SK-N-SH (cell line): ENCODE measurements at regions of chr6 and their contacts with region 1.

Region 1: DNA sequence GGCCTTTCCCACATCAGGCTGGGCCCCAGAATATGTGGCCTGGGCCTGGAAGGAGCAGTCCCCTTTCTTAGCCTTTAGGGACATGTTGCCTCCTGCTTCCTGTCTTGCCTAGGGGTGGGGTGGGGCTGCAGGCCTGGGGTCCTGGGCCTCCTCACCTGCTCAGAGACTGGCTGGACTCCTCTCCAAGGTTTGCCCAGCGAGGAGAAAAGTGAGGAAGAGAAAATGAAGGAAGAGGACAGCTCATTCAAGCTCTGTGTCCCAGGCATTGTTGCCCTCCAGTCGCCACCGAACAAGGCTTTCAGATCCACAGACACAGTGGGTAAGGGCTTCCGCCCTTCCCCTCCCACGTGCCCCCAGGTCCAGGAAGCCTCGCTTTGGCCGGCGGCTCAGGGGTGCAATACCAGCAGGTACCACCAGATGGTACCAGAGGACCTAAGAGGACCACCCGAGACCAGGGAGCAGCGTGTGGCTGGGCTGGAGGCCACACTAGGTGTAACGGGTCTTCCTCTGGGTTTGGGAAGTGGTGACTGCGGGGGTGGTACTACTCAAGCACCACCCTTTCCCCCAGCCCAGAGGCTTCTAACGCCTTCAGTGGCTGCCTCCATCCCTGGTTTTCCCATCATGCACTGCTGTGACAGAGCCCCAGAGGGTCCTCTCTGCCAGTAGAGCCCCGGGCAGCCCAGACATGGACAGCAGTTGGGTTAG is 5.5 kb upstream of the BAK1 start:
- DNase-seq: peak; percentile 89
- H3K4me3 ChIP-seq: peak overlapping the region in 1 of 2 experiments; percentile 35; a peak in 2 of 4 replicates
- H3K27ac ChIP-seq: no peak overlapping the region
- H3K4me1 ChIP-seq: peaks cover 7 to 19% of the 10 kb centered on the region in 2 experiments; a peak in 3 of 4 replicates
- H3K27me3 ChIP-seq: no peaks in the 10 kb centered on the region
- CTCF ChIP-seq: peak; percentile 95
- EP300 ChIP-seq: no peak
- RAD21 ChIP-seq: peak; percentile 91

Region 2: DNA sequence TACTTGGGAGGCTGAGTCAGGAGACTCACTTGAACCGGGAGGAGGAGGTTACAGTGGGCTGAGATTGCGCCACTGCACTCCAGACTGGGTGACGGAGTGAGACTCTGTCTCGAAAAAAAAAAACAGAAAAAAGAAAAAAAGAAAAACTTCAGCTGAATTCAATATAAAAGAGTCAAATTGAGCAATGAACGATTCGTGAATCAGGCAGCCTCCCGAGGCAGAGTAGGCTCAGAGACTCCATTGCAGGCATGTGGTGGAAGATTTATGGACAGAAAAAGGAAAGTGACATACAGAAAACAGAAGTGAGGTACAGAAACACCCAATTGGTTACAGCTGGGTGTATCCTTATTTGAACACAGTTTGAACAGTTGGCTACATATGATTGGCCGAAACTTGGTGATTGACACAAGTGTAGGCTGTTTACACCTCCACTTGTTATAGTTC is 453.5 kb before region 1 on chr6:
- CTCF ChIA-PET with region 1: no interaction called
- POLR2A ChIA-PET with region 1: no interaction called
- DNase-seq: no peak
- H3K4me3 ChIP-seq: no peak overlapping the region
- H3K27ac ChIP-seq: no peak overlapping the region
- H3K4me1 ChIP-seq: no peaks in the 10 kb centered on the region
- H3K27me3 ChIP-seq: peaks cover 44% of the 10 kb centered on the region; the same call in 1 of the 2 replicates
- CTCF ChIP-seq: no peak
- EP300 ChIP-seq: no peak
- RAD21 ChIP-seq: no peak

Region 3: GRCh38 chr6:33566182-33567084 is 19.1 kb before region 1 on chr6:
- CTCF ChIA-PET with region 1: no interaction called
- POLR2A ChIA-PET with region 1: no interaction called
- DNase-seq: no peak
- H3K4me3 ChIP-seq: no peak overlapping the region
- H3K27ac ChIP-seq: no peak overlapping the region
- H3K4me1 ChIP-seq: peaks cover 2 to 4% of the 10 kb centered on the region in 2 experiments; a peak in 1 of 4 replicates
- H3K27me3 ChIP-seq: no peaks in the 10 kb centered on the region
- CTCF ChIP-seq: no peak
- EP300 ChIP-seq: no peak
- RAD21 ChIP-seq: no peak

Region 4: GRCh38 chr6:33607784-33608161 is 22.2 kb after region 1 on chr6:
- CTCF ChIA-PET with region 1: interaction called, 20 read pairs
- POLR2A ChIA-PET with region 1: interaction called, 3 read pairs
- DNase-seq: peak; percentile 43
- H3K4me3 ChIP-seq: no peak overlapping the region
- H3K27ac ChIP-seq: peak overlapping the region in 1 of 2 experiments; percentile 77; a peak in 1 of 4 replicates
- H3K4me1 ChIP-seq: peaks cover 9 to 50% of the 10 kb centered on the region in 2 experiments; a peak in 2 of 4 replicates
- H3K27me3 ChIP-seq: no peaks in the 10 kb centered on the region
- CTCF ChIP-seq: no peak; the same call in 1 of the 2 replicates
- EP300 ChIP-seq: no peak
- RAD21 ChIP-seq: peak; percentile 26

Region 5: DNA sequence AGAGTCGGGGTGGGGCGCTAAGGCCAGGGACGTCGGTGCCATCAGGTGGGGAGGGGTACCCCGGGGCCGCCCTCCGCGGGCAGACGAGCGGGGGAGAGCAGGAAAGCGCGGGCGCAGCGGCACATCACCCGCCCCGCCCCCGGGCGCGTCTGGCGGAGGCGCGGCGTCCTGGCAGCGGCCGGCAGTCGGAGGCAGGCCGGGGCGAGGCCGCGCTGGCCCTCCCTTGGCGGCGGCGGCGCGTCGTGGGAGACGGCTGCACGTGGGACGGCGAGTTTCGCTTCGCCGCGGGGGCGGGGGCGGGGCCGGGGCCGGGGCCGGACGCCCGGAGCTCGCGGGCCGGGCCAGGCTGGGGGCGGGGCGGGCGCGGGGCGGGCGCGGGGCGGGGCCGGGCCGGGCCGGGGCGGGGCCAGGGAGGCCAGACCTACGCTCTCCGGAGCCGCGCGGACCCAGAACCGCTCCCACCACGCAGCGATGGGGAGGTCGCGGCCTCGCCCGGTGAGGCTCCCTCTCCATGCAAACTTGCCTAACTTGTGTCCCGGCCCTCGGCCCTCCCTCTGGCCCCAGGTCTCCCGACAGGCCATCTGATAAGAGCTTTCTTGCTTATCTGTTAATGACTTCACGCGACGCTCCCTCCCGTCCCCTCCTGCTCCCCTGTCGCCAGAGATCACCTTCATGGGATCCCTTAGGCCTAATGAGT is 48.1 kb after region 1 on chr6:
- CTCF ChIA-PET with region 1: interaction called, 28 read pairs
- POLR2A ChIA-PET with region 1: no interaction called
- DNase-seq: peak; percentile 90
- H3K4me3 ChIP-seq: peak overlapping the region; percentile 58 to 66
- H3K27ac ChIP-seq: peak overlapping the region in 1 of 2 experiments; percentile 61; a peak in 1 of 4 replicates
- H3K4me1 ChIP-seq: peaks cover 0 to 28% of the 10 kb centered on the region in 2 experiments; a peak in 1 of 4 replicates
- H3K27me3 ChIP-seq: no peaks in the 10 kb centered on the region
- CTCF ChIP-seq: no peak
- EP300 ChIP-seq: no peak
- RAD21 ChIP-seq: no peak

Region 6: GRCh38 chr6:33694401-33694931 is 108.9 kb after region 1 on chr6:
- CTCF ChIA-PET with region 1: interaction called, 19 read pairs
- POLR2A ChIA-PET with region 1: no interaction called
- DNase-seq: peak; percentile 47
- H3K4me3 ChIP-seq: no peak overlapping the region
- H3K27ac ChIP-seq: peak overlapping the region; percentile 47 to 59; a peak in 3 of 4 replicates
- H3K4me1 ChIP-seq: peaks cover 34 to 47% of the 10 kb centered on the region in 2 experiments; a peak in 3 of 4 replicates
- H3K27me3 ChIP-seq: no peaks in the 10 kb centered on the region
- CTCF ChIP-seq: no peak
- EP300 ChIP-seq: no peak
- RAD21 ChIP-seq: no peak

Region 7: DNA sequence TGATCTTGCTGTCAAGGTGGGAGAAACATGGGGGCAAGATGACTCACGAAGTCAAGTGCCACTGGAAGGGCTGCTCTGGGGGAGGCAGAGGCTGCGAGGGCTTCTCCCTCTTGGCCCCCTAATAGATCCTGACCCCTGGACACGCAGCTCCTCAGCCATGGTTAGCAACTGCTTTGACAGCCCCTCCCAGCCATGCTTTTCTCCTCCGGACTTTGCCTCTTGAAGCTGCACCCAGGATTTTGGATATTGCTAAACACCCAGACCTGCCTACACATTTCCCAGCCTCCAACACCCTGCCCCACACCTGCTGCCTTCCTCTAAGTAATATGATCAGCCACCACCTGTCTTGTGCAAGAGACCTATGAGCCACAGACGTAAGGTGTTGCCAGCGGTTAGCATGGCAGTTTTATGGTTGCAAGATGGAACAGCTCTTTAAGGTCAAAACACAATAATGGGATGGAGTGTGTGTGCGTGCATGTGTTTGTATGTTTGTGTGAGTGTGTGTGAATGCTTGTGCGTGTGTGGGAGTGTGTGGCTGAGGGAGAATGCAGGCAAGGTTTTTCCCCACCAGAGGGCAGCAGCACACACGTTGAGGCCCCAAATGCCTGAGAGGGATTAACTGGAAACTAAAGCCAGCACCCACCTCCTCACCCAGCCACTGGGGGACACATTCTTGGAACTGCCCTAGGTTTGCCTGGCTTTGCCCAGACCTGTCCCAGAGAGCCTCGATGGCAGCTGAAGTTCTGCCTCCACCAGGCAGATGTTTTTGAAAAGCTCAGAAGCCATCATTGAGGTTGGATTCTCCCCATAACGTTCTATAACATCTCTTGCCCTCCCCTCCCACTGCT is 158.7 kb after region 1 on chr6:
- CTCF ChIA-PET with region 1: interaction called, 28 read pairs
- POLR2A ChIA-PET with region 1: no interaction called
- DNase-seq: peak; percentile 90
- H3K4me3 ChIP-seq: no peak overlapping the region; a peak in 1 of 4 replicates
- H3K27ac ChIP-seq: no peak overlapping the region
- H3K4me1 ChIP-seq: peaks cover 15 to 37% of the 10 kb centered on the region in 2 experiments; a peak in 3 of 4 replicates
- H3K27me3 ChIP-seq: no peaks in the 10 kb centered on the region
- CTCF ChIP-seq: peak; percentile 93
- EP300 ChIP-seq: no peak
- RAD21 ChIP-seq: peak; percentile 83